Pancreas (tissue), 10 donors: ENCODE measurements at regions of chr5 and their contacts with region 1.

Region 1: GRCh38 chr5:30401479-30402058 is 791.9 kb upstream of the CDH6 start:
- DNase-seq: peak in 2 of 6 donors; percentile 17 to 18
- ATAC-seq: no peak
- H3K4me3 ChIP-seq: no peak overlapping the region
- H3K27ac ChIP-seq: no peak overlapping the region
- H3K4me1 ChIP-seq: no peaks in the 10 kb centered on the region
- H3K27me3 ChIP-seq: no peaks in the 10 kb centered on the region
- CTCF ChIP-seq: peak in 3 of 4 donors; percentile 15 to 22 (median 22)

Region 2: GRCh38 chr5:30561771-30562170 is 160.2 kb after region 1 on chr5:
- intact Hi-C with region 1: no loop called
- DNase-seq: no peak
- ATAC-seq: no peak
- H3K4me3 ChIP-seq: no peak overlapping the region
- H3K27ac ChIP-seq: no peak overlapping the region
- H3K4me1 ChIP-seq: no peaks in the 10 kb centered on the region
- H3K27me3 ChIP-seq: no peaks in the 10 kb centered on the region
- CTCF ChIP-seq: no peak

Region 3: DNA sequence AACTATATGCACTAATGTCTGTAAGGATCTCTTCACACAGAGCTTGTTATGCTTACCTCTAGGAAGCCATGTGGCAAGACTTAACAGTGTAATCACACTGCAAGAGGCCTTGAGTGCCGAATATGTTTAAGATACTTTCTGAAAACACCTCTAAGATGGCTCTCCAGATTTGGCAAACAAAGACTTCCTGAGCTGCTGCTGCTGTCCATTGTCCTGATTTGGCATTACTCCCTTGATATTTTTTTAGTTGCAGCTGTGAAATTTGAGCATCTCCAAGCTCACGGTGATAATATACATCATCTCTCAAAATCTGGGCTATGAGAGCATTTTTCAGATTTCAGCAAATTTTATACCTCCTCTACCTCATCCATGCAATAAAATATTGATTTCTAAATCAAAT is 407.4 kb after region 1 on chr5:
- intact Hi-C with region 1: no loop called
- DNase-seq: no peak
- ATAC-seq: no peak
- H3K4me3 ChIP-seq: no peak overlapping the region
- H3K27ac ChIP-seq: no peak overlapping the region
- H3K4me1 ChIP-seq: no peaks in the 10 kb centered on the region
- H3K27me3 ChIP-seq: no peaks in the 10 kb centered on the region
- CTCF ChIP-seq: no peak

Region 4: DNA sequence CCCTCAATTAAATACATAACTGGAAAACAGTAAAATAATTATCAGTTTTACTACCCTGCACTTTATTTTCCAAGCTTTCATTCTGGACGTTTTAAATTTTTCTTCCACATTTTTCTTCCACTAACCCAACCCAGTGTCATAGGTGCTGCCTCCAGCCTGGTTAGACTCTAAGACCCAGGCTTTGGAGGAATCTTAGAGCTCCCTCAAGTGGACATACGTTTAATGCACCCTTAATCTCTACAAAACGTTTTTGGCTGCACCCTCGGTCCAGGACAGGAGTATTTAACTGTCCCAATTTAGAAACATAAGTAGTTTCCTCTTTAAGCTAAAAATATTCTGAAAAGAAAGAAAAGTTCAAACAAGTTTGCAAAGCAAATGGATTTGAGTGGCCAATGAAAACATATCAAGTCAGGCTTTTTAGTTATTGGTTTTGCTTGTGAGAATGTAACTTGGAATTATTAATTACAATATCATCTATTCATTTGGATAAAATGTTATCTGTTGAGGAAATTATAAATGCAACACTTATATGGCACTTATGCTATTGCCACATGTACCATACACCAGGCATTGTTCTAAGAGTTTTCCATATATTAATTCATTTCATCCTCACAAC is 830.8 kb after region 1 on chr5:
- intact Hi-C with region 1: loop called in 1 of 3 experiments (anchors 10 kb)
- DNase-seq: no peak
- ATAC-seq: peak; percentile 56 to 91 (median 86)
- H3K4me3 ChIP-seq: no peak overlapping the region
- H3K27ac ChIP-seq: no peak overlapping the region
- H3K4me1 ChIP-seq: no peaks in the 10 kb centered on the region
- H3K27me3 ChIP-seq: no peaks in the 10 kb centered on the region
- CTCF ChIP-seq: peak; percentile 25 to 63 (median 48)